ENCODE measurements at regions of chr1 and their contacts with region 1.

Region 1: DNA sequence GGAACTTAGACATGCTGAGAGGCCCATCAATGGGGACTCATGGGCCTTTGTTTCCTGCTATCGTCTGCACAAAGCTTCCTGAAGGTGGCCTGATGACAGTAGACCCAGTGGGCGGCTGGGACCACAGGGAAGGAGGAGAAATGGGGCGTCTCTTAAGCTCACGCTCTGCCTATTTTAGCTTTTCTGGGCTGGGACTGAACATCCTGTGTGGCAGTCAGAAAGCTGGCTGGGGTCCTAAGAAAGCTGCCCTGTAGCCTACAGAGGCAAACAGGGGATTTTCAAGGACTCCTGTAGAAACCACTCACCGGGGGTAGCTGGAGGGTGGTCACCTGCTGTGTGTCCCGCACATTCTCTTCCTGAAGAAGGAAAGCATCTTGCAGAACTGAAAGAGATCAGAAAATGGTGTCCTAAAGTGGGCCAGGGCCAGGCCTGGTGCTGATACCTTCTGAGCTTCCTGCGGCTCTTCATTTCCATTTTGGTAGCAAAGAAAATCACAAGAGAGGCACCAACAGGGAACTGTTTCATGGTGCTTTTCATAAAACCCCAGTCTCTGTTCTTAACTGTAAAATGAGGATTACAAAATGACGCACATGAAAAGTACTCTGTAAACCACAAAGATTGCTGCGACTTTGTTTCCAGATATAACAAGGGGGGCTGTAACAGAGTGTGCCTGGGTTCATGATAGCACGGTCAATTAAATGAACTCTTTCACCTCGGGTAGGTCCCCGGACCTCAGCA is 8.6 kb downstream of the ZNF496 start:
- DNase-seq: peak; percentile 55
- ATAC-seq: peak; percentile 93
- H3K4me3 Mint-ChIP-seq: peak overlapping the region; percentile 82
- H3K27ac Mint-ChIP-seq: peak overlapping the region; percentile 93
- H3K4me1 Mint-ChIP-seq: peaks cover 51% of the 10 kb centered on the region
- H3K27me3 Mint-ChIP-seq: no peaks in the 10 kb centered on the region

Region 2: DNA sequence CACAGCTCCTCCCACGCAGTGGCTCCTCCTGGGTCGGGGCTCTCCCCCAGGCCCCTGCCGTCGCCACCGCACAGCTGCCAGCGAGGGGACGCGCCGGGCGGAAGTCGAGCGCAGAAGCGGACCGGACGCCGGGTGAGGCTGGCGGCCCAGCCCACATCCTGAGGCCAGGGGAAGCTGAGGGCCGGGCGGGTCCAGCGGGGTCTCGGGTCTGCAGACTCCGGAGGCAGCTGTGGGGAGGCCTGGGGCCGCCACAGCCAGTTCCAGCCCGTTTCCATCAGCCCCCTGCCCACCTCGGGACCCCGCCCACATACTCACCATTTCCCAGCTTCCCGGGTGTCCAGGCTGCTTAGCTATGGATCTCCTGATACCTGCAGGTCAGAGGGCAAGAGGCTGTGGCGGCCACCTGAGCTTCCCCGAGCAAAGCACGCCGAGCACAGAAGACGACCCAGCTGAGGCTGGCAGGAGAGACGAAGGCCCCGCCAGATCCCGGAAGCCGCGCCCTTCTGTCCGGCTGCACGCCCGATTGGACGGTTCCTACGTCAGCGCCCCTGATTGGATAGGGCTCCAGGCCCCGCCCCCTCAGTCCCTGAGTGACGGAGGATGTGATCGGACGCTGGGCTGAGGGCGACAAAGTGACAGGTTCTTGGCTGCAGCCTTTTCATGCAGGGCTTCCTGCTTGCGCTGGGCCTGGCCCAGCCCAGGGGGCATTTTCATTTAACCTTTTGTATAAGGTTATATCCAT is 112.5 kb before region 1 on chr1:
- POLR2A ChIA-PET with region 1: interaction called, 10 read pairs
- DNase-seq: peak; percentile 96
- ATAC-seq: peak; percentile 98
- H3K4me3 Mint-ChIP-seq: peak overlapping the region; percentile 89
- H3K27ac Mint-ChIP-seq: peak overlapping the region; percentile 94
- H3K4me1 Mint-ChIP-seq: peaks cover 25% of the 10 kb centered on the region
- H3K27me3 Mint-ChIP-seq: no peaks in the 10 kb centered on the region